IMR-90 (cell line): ENCODE measurements at regions of chr1 and their contacts with region 1.

Region 1: GRCh38 chr1:155392898-155393411 is 72.3 kb downstream of the RUSC1 start:
- DNase-seq: peak; percentile 55
- ATAC-seq: peak; percentile 68
- H3K4me3 ChIP-seq: no peak overlapping the region
- H3K27ac ChIP-seq: no peak overlapping the region
- H3K4me1 ChIP-seq: peaks cover 3% of the 10 kb centered on the region; the same call in 1 of the 2 replicates
- H3K27me3 ChIP-seq: no peaks in the 10 kb centered on the region
- CTCF ChIP-seq: no peak
- POLR2A ChIP-seq: no peak
- RAD21 ChIP-seq: no peak

Region 2: DNA sequence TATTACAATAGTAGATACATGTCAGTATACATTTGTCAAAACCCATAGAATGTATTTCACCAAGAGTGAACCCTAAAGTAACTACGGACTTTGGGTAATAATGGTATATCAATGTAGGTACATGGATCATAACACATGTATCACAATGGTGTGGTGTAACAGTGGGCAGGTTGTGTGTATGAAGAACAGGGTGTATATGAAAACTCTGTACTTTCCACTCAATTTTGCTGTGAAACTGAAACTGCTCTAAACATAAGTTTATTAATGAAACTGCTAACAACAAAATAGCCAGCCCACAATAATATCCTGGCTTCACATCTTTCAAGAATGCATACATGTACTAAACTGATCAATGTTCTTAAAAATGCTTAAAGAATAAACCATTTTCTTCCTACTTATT is 18.0 kb after region 1 on chr1:
- CTCF ChIA-PET with region 1: interaction called, 5 read pairs
- POLR2A ChIA-PET with region 1: interaction called, 11 read pairs
- dilution Hi-C with region 1: no loop called
- in situ Hi-C with region 1: no loop called
- intact Hi-C with region 1: no loop called
- DNase-seq: no peak
- ATAC-seq: no peak
- H3K4me3 ChIP-seq: no peak overlapping the region
- H3K27ac ChIP-seq: no peak overlapping the region
- H3K4me1 ChIP-seq: no peaks in the 10 kb centered on the region
- H3K27me3 ChIP-seq: no peaks in the 10 kb centered on the region
- CTCF ChIP-seq: no peak
- POLR2A ChIP-seq: no peak
- RAD21 ChIP-seq: no peak